Natural killer cell (primary cell): ENCODE measurements at regions of chr1 and their contacts with region 1.

Region 1: GRCh38 chr1:93804412-93804811 is 74.6 kb downstream of the DNTTIP2 start:
- DNase-seq: no peak
- ATAC-seq: no peak
- H3K4me3 ChIP-seq: no peak overlapping the region
- H3K4me3 Mint-ChIP-seq: no peak overlapping the region
- H3K27ac ChIP-seq: no peak overlapping the region
- H3K27ac Mint-ChIP-seq: no peak overlapping the region
- H3K4me1 ChIP-seq: no peaks in the 10 kb centered on the region
- H3K4me1 Mint-ChIP-seq: no peaks in the 10 kb centered on the region
- H3K27me3 ChIP-seq: no peaks in the 10 kb centered on the region
- H3K27me3 Mint-ChIP-seq: peaks cover 0 to 10% of the 10 kb centered on the region in 2 donors
- CTCF ChIP-seq: no peak

Region 2: DNA sequence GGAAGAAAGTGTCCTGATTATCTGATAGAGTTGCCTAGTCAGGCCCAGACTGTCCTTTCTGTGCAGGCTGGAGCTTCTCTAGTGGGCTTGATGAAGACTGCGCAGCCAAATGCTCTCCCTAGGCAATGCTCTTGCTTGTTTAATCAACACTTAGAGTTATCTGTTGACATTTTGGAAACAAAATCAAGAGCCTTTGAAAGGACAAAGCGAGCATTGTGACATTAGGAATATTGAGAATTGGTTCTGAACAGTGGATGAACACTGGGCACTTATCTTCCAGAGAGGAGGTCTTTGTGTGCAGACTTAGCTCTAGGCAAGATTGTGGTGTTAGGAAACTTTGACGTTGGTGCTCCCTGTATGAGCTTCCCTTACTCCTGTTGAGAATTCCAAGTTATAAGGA is 19.9 kb before region 1 on chr1:
- intact Hi-C with region 1: loop called (anchors 2 kb)
- DNase-seq: no peak
- ATAC-seq: no peak
- H3K4me3 ChIP-seq: no peak overlapping the region
- H3K4me3 Mint-ChIP-seq: no peak overlapping the region
- H3K27ac ChIP-seq: no peak overlapping the region
- H3K27ac Mint-ChIP-seq: no peak overlapping the region
- H3K4me1 ChIP-seq: no peaks in the 10 kb centered on the region
- H3K4me1 Mint-ChIP-seq: peaks cover 0 to 5% of the 10 kb centered on the region in 2 donors
- H3K27me3 ChIP-seq: no peaks in the 10 kb centered on the region
- H3K27me3 Mint-ChIP-seq: no peaks in the 10 kb centered on the region
- CTCF ChIP-seq: no peak

Region 3: GRCh38 chr1:93980320-93981273 is 176.2 kb after region 1 on chr1:
- intact Hi-C with region 1: no loop called
- DNase-seq: peak in 1 of 2 donors; percentile 5
- ATAC-seq: no peak
- H3K4me3 ChIP-seq: no peak overlapping the region
- H3K4me3 Mint-ChIP-seq: no peak overlapping the region
- H3K27ac ChIP-seq: no peak overlapping the region
- H3K27ac Mint-ChIP-seq: no peak overlapping the region
- H3K4me1 ChIP-seq: no peaks in the 10 kb centered on the region
- H3K4me1 Mint-ChIP-seq: no peaks in the 10 kb centered on the region
- H3K27me3 ChIP-seq: no peaks in the 10 kb centered on the region
- H3K27me3 Mint-ChIP-seq: peaks cover 0 to 7% of the 10 kb centered on the region in 2 donors
- CTCF ChIP-seq: no peak

Region 4: DNA sequence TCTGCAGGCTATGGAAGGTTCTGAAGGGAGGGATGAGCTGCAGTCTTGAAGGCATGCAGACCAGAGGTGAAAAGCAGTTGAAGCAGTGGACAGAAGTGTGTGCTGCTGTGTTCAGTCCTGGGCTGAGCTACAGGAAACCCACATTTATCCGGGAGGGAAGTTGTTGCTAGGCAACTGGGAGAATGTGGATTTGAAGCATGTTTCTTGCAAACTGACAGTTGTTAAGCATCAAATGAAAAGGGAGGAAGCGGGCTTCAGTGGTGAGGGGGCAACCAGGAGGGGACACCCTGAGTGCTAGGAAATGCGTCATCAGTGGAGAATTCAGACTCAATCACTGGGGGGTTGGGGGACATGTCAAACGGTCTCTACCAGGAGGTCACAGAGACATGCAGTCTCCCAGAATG is 287.8 kb after region 1 on chr1:
- intact Hi-C with region 1: no loop called
- DNase-seq: peak in 1 of 2 donors; percentile 35
- ATAC-seq: peak; percentile 40 to 77 (median 55)
- H3K4me3 ChIP-seq: no peak overlapping the region
- H3K4me3 Mint-ChIP-seq: no peak overlapping the region
- H3K27ac ChIP-seq: no peak overlapping the region
- H3K27ac Mint-ChIP-seq: peak overlapping the region; percentile 22 to 56
- H3K4me1 ChIP-seq: peaks cover 9% of the 10 kb centered on the region
- H3K4me1 Mint-ChIP-seq: peaks cover 11 to 14% of the 10 kb centered on the region in 2 donors
- H3K27me3 ChIP-seq: no peaks in the 10 kb centered on the region
- H3K27me3 Mint-ChIP-seq: peaks cover 0 to 11% of the 10 kb centered on the region in 2 donors
- CTCF ChIP-seq: no peak